Activated T-helper 1 cell treated with anti-CD3 and anti-CD28 coated beads, Interleukin-12 subunit alpha, Interleukin-12 subunit beta, Interleukin-2, Interleukin-4 antibody, amounts not matched to agents 30 ng/mL and 10 ng/mL and 1 ng/mL, durations not matched to agents 14 hours and 24 hours and 36 hours (primary cell): ENCODE measurements at regions of chr13 and their contacts with region 1.

Region 1: DNA sequence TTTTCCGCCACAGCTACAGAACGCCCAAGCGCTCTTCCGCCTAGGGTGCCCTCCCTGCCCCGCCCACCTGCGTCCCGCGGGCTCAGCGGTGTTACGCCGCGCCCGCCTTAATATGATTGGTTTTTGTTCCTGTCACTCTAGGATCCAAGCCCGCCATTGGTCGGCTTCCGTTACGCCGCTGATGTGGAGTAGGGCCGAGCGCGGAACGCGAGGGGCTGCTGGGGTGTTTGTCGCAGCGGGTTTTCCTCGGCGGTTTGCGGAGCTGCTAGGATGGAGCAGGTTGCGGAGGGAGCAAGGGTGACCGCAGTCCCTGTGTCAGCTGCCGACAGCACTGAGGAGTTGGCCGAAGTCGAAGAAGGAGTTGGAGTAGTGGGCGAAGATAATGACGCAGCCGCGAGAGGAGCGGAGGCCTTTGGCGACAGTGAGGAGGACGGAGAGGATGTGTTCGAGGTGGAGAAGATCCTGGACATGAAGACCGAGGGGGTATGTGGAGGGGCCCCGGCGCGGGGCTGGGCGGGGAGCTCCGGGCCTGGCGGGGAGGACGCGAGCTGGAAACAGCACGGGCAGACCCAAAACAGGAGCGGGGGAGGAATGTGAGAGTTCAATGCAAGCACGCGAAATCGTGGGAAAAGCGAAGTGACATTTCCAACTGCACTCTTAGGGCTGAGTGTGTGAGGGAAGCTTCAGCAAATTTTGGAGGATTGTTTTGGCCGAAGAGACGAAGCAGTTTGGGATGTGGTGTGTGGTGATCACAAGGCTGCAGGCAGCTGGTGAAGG is at the start of gene MPHOSPH8:
- DNase-seq: peak; percentile 91
- H3K4me3 Mint-ChIP-seq: peak within 1 kb of the TSS; percentile 98
- H3K27ac Mint-ChIP-seq: peak within 1 kb of the TSS; percentile 98
- H3K4me1 Mint-ChIP-seq: peaks cover 26% of the 10 kb centered on the region
- H3K27me3 Mint-ChIP-seq: no peaks in the 10 kb centered on the region
- total RNA-seq, gene MPHOSPH8: 42.9 and 44.3 TPM in 2 replicates

Region 2: GRCh38 chr13:19573120-19573716 is 60.4 kb before region 1 on chr13:
- intact Hi-C with region 1: loop called (anchors 5 kb)
- DNase-seq: no peak
- H3K4me3 Mint-ChIP-seq: no peak overlapping the region
- H3K27ac Mint-ChIP-seq: no peak overlapping the region
- H3K4me1 Mint-ChIP-seq: no peaks in the 10 kb centered on the region
- H3K27me3 Mint-ChIP-seq: peaks cover 2% of the 10 kb centered on the region

Region 3: GRCh38 chr13:19587635-19588300 is 45.9 kb before region 1 on chr13:
- intact Hi-C with region 1: loop called (anchors 1 kb)
- DNase-seq: peak; percentile 27
- H3K4me3 Mint-ChIP-seq: peak overlapping the region; percentile 78
- H3K27ac Mint-ChIP-seq: peak overlapping the region; percentile 82
- H3K4me1 Mint-ChIP-seq: peaks cover 20% of the 10 kb centered on the region
- H3K27me3 Mint-ChIP-seq: peaks cover 6% of the 10 kb centered on the region

Region 4: GRCh38 chr13:19713186-19713965 is 79.7 kb after region 1 on chr13:
- intact Hi-C with region 1: loop called (anchors 5 kb)
- DNase-seq: no peak
- H3K4me3 Mint-ChIP-seq: no peak overlapping the region
- H3K27ac Mint-ChIP-seq: peak overlapping the region; percentile 61
- H3K4me1 Mint-ChIP-seq: peaks cover 21% of the 10 kb centered on the region
- H3K27me3 Mint-ChIP-seq: no peaks in the 10 kb centered on the region

Region 5: GRCh38 chr13:19782049-19782726 is 148.5 kb after region 1 on chr13:
- intact Hi-C with region 1: loop called (anchors 1 kb)
- DNase-seq: peak; percentile 60
- H3K4me3 Mint-ChIP-seq: peak overlapping the region; percentile 97
- H3K27ac Mint-ChIP-seq: peak overlapping the region; percentile 97
- H3K4me1 Mint-ChIP-seq: peaks cover 17% of the 10 kb centered on the region
- H3K27me3 Mint-ChIP-seq: peaks cover 5% of the 10 kb centered on the region